ENCODE measurements at regions of chr6 and their contacts with region 1.

Region 1: GRCh38 chr6:144478483-144478882 is 193.3 kb downstream of the UTRN start:
- DNase-seq: peak; percentile 55
- H3K4me3 ChIP-seq: no peak overlapping the region
- H3K27ac ChIP-seq: no peak overlapping the region
- H3K4me1 ChIP-seq: peaks cover 9% of the 10 kb centered on the region
- H3K27me3 ChIP-seq: no peaks in the 10 kb centered on the region
- CTCF ChIP-seq: no peak
- POLR2A ChIP-seq: no peak

Region 2: DNA sequence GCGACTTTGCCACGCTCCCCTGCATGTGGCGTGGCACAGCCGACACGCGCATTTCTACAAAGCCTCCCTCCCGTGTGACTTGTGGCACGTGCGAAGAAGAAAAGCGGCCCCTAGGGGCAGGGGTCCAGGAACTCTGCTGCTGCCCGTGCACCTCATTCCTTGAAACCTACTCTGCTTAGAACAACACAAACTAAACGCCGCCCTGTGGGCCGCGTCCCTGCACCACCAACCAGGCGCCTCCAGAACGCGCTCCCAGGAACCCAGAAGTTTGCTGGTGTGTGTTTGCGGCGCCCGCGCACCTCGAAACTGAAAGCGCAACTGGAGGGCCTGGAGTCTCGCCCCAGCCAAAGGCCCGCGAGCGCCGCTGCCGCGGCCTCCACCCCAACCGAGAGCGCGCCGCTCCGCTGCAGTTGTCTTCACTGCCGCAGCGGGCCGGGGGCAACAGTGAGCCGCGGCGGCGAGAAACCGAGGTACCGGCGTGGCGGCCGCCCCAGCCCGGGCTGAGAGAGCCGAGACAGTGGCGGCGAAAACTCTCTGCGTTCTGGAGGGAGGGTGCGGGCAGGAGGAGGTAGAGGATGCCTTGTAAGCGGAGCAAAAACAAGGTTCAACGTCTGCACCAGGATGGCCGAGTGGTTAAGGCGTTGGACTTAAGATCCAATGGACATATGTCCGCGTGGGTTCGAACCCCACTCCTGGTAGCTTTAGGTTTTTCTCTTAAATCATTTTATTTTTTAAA is 262.4 kb before region 1 on chr6:
- intact Hi-C with region 1: loop called (anchors 5 kb)
- DNase-seq: peak; percentile 97
- H3K4me3 ChIP-seq: peak overlapping the region; percentile 79 to 89
- H3K27ac ChIP-seq: peak overlapping the region; percentile 98 to 99
- H3K4me1 ChIP-seq: peaks cover 11% of the 10 kb centered on the region
- H3K27me3 ChIP-seq: no peaks in the 10 kb centered on the region
- CTCF ChIP-seq: peak; percentile 48 to 72 (median 63)
- POLR2A ChIP-seq: no peak

Measured in testis (tissue), 5 donors.